Right cardiac atrium (tissue), 5 donors: ENCODE measurements at regions of chr10 and their contacts with region 1.

Region 1: GRCh38 chr10:118568327-118568848 is 27.1 kb downstream of the PRLHR start:
- DNase-seq: no peak
- ATAC-seq: peak; percentile 52 to 62
- H3K4me3 ChIP-seq: no peak overlapping the region
- H3K27ac ChIP-seq: no peak overlapping the region
- H3K4me1 ChIP-seq: peaks cover 3% of the 10 kb centered on the region
- H3K27me3 ChIP-seq: no peaks in the 10 kb centered on the region

Region 2: GRCh38 chr10:118321724-118322575 is 246.4 kb before region 1 on chr10:
- intact Hi-C with region 1: no loop called
- DNase-seq: no peak
- ATAC-seq: peak in 1 of 2 donors; percentile 52
- H3K4me3 ChIP-seq: no peak overlapping the region
- H3K27ac ChIP-seq: no peak overlapping the region
- H3K4me1 ChIP-seq: no peaks in the 10 kb centered on the region
- H3K27me3 ChIP-seq: no peaks in the 10 kb centered on the region

Region 3: DNA sequence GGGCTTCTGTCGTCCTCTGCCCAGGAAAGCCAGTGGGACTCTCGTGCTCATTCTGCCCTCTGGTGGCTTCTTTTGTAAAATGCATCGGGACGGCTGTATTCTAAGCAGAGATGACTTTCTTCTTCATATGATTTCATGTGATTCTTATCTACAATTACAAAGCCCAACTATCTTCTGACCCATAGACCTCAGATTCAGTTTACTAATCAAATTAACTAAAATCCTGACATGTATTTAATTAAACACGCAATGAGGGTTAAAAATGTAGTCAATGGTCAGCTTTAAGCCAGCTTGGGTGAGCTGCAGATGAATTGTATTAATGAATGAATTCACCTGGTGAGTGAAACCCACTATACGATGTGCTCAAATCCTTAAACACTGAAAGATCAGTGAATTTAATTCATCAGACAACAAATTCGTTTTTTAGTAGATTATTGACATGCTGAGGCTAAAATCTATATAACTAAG is 108.6 kb before region 1 on chr10:
- intact Hi-C with region 1: no loop called
- DNase-seq: peak; percentile 30 to 78 (median 70)
- ATAC-seq: peak; percentile 79 to 88
- H3K4me3 ChIP-seq: no peak overlapping the region
- H3K27ac ChIP-seq: no peak overlapping the region
- H3K4me1 ChIP-seq: no peaks in the 10 kb centered on the region
- H3K27me3 ChIP-seq: peaks cover 3% of the 10 kb centered on the region

Region 4: DNA sequence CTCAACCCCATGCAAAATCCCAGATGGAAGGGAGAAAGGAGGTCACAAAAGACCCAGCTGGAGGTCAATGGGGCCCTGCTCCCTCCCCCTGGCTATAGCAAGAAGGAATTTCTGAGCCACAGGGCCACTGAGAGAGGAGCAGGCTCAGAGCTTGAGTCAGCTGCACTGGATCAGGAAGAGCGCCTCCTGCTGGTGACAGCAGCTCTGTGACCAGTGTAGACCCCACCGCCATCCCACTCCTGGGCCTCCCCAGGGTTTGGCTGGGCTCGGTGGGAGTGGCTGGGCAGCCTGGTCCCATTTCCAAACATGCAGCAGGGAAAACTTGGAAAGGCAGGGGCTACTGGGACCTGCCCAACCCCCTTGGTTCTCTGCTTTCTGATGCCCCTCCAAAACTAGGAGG is 58.6 kb after region 1 on chr10:
- intact Hi-C with region 1: no loop called
- DNase-seq: no peak
- ATAC-seq: no peak
- H3K4me3 ChIP-seq: no peak overlapping the region
- H3K27ac ChIP-seq: no peak overlapping the region
- H3K4me1 ChIP-seq: no peaks in the 10 kb centered on the region
- H3K27me3 ChIP-seq: no peaks in the 10 kb centered on the region

Region 5: GRCh38 chr10:118720685-118721538 is 152.5 kb after region 1 on chr10:
- intact Hi-C with region 1: loop called (anchors 2 to 5 kb)
- DNase-seq: no peak
- ATAC-seq: peak in 1 of 2 donors; percentile 48
- H3K4me3 ChIP-seq: no peak overlapping the region
- H3K27ac ChIP-seq: no peak overlapping the region
- H3K4me1 ChIP-seq: peaks cover 2% of the 10 kb centered on the region
- H3K27me3 ChIP-seq: no peaks in the 10 kb centered on the region

Region 6: DNA sequence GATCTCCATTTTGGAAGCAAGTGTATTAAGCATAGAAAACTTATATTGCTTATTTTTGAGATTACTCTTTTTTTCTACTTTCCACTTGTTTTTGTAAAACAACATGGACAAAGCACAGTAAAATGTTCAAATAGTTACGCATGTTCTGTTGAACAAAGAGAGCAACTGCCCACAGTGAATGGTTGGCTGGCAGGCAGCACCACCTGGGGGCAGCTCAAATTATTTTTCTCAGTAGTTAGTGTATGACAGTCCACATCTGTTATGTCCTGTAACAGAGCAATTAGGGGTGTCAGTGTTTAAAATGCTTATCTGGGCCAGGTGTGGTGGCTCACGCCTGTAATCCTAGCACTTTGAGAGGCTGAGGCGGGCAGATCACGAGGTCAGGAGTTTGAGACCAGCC is 232.5 kb after region 1 on chr10:
- intact Hi-C with region 1: loop called in 3 of 4 experiments (anchors 2 to 10 kb)
- DNase-seq: peak in 1 of 3 donors; percentile 69
- ATAC-seq: peak; percentile 65 to 74
- H3K4me3 ChIP-seq: no peak overlapping the region
- H3K27ac ChIP-seq: no peak overlapping the region
- H3K4me1 ChIP-seq: no peaks in the 10 kb centered on the region
- H3K27me3 ChIP-seq: no peaks in the 10 kb centered on the region